Breast epithelium (tissue), 4 donors: ENCODE measurements at regions of chr11 and their contacts with region 1.

Region 1: GRCh38 chr11:63951779-63952536 is 13.2 kb downstream of the NAA40 start:
- DNase-seq: peak in 1 of 2 donors; percentile 60
- H3K4me3 ChIP-seq: peak overlapping the region in 1 of 3 donors; percentile 31
- H3K27ac ChIP-seq: peak overlapping the region; percentile 22 to 75
- H3K4me1 ChIP-seq: no peaks in the 10 kb centered on the region
- H3K27me3 ChIP-seq: no peaks in the 10 kb centered on the region
- CTCF ChIP-seq: no peak
- POLR2A ChIP-seq: no peak

Region 2: GRCh38 chr11:63892228-63892627 is 59.7 kb before region 1 on chr11:
- intact Hi-C with region 1: loop called (anchors 2 kb)
- DNase-seq: no peak
- H3K4me3 ChIP-seq: no peak overlapping the region
- H3K27ac ChIP-seq: peak overlapping the region in 1 of 2 donors; percentile 23
- H3K4me1 ChIP-seq: peaks cover 14 to 34% of the 10 kb centered on the region in 2 donors
- H3K27me3 ChIP-seq: no peaks in the 10 kb centered on the region
- CTCF ChIP-seq: no peak
- POLR2A ChIP-seq: no peak

Region 3: GRCh38 chr11:64028398-64029115 is 76.6 kb after region 1 on chr11:
- intact Hi-C with region 1: no loop called
- DNase-seq: no peak
- H3K4me3 ChIP-seq: peak overlapping the region in 1 of 3 donors; percentile 40
- H3K27ac ChIP-seq: no peak overlapping the region
- H3K4me1 ChIP-seq: no peaks in the 10 kb centered on the region
- H3K27me3 ChIP-seq: no peaks in the 10 kb centered on the region
- CTCF ChIP-seq: no peak
- POLR2A ChIP-seq: no peak

Region 4: GRCh38 chr11:64638018-64638665 is 686.2 kb after region 1 on chr11:
- intact Hi-C with region 1: no loop called
- DNase-seq: no peak
- H3K4me3 ChIP-seq: peak overlapping the region in 2 of 3 donors; percentile 29 to 48
- H3K27ac ChIP-seq: no peak overlapping the region
- H3K4me1 ChIP-seq: no peaks in the 10 kb centered on the region
- H3K27me3 ChIP-seq: peaks cover 0 to 49% of the 10 kb centered on the region in 2 donors
- CTCF ChIP-seq: no peak
- POLR2A ChIP-seq: no peak